ENCODE measurements at regions of chr3 and their contacts with region 1.

Region 1: GRCh38 chr3:101573449-101574387 is at the start of gene PCNP:
- DNase-seq: peak; percentile 99
- ATAC-seq: peak; percentile 82
- H3K4me3 ChIP-seq: peak within 1 kb of the TSS; percentile 95
- H3K27ac ChIP-seq: peak within 1 kb of the TSS; percentile 85
- H3K4me1 ChIP-seq: peaks cover 19% of the 10 kb centered on the region
- H3K27me3 ChIP-seq: no peaks in the 10 kb centered on the region
- CTCF ChIP-seq: peak; percentile 97
- total RNA-seq, gene PCNP: 71.1 and 72.3 TPM in 2 replicates

Region 2: DNA sequence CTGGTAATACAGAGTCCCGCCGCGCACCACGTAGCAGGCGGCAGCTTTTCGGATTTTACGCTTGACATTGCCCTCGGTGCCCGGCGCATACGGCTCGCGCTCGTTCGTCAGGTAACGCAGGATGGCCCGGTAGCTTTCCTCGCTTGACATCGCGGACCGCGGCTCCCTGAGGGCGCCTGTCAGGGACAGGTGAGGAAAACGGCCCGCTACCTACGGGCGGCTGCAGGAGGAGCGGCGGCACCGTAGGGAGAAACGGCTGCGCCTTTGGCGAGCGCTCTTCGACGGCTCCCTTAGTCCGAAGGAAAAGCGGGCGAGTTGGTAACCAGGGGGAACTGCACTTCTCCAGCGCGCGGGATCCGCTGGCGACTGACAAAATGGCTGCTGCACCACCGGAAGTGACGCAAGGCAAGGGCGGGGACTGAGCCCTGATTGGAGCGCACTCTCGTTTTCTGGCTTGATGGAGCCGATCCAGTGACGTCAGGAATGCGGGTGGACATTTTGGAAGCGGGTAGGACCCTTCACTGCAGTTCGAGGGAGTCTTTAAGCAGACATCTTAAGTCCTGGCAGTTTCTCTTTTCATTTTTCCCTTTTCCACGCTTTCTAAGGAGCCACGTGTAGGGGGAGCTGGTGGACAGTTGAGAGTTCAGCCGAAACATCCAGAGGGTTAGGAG is 103.2 kb after region 1 on chr3 and contains the start of gene ZBTB11:
- CTCF ChIA-PET with region 1: interaction called, 9 read pairs
- POLR2A ChIA-PET with region 1: interaction called, 11 read pairs
- intact Hi-C with region 1: loop called (anchors 2 kb)
- DNase-seq: peak; percentile 100
- ATAC-seq: peak; percentile 66
- H3K4me3 ChIP-seq: peak within 1 kb of the TSS; percentile 98
- H3K27ac ChIP-seq: peak within 1 kb of the TSS; percentile 74
- H3K4me1 ChIP-seq: peaks cover 21% of the 10 kb centered on the region
- H3K27me3 ChIP-seq: no peaks in the 10 kb centered on the region
- CTCF ChIP-seq: peak; percentile 71
- total RNA-seq, gene ZBTB11: 22.8 and 27.6 TPM in 2 replicates